Cardiac septum (tissue), 1 donor: ENCODE measurements at regions of chr11 and their contacts with region 1.

Region 1: GRCh38 chr11:57324886-57325734 is at the start of gene TNKS1BP1:
- DNase-seq: peak; percentile 98
- total RNA-seq, gene TNKS1BP1: 36.2 TPM

Region 2: GRCh38 chr11:57277845-57278709 is 47.0 kb before region 1 on chr11:
- intact Hi-C with region 1: loop called (anchors 5 kb)
- DNase-seq: no peak